ENCODE measurements at regions of chr9 and their contacts with region 1.

Region 1: DNA sequence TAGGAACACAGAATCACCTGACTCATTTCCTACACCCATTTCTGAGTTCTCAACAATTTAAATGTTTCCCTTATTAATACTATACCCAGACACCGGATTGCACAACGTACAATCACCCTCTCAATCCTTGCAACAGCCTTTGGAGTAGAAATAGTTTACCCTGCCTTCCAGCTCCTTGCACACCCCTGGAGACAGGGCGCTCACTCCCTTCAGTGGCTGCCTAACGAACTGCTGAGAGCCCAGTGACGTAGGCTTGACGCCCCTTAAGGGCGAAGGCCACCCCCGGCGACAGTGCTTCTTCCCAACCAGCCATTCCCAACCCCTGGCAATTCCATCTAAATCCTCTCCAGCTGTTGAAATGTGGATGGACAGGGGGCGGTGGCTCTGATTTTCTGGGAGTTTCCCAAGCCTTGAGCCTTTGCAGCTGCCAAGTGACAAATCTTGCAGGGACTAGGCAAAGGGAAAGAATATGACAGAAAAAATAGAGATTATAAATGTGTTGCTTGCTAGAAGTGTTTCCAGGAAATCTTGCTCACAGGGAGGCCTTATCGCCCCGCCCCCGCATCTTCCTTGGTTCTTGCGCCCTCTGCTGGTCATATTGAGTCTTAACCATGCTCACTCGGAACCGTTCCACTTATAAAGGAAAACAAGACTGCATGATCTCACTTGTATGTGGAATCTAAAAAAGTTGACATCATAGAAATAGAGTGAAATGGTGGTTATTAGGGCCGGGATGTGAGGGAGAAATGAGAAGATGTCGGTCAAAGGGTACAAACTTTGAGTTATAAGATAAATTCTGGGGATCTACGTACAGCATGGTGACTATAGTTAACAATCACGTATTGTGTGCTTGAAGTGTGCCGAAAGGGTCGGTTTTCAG is 7.6 kb upstream of the BARX1 start:
- DNase-seq: peak; percentile 88 to 91 (median 90)
- ATAC-seq: peak; percentile 93
- H3K4me3 ChIP-seq: no peak overlapping the region
- H3K27ac ChIP-seq: no peak overlapping the region
- H3K4me1 ChIP-seq: peaks cover 5 to 27% of the 10 kb centered on the region in 2 experiments; a peak in 4 of 5 replicates
- H3K27me3 ChIP-seq: peaks cover 19 to 47% of the 10 kb centered on the region in 2 experiments; a peak in 4 of 5 replicates
- CTCF ChIP-seq: peak; percentile 84 to 90 (median 85)
- EP300 ChIP-seq: peak; percentile 48
- POLR2A ChIP-seq: no peak
- RAD21 ChIP-seq: peak; percentile 69 to 90

Region 2: GRCh38 chr9:93693129-93693528 is 269.7 kb before region 1 on chr9:
- CTCF ChIA-PET with region 1: no interaction called
- POLR2A ChIA-PET with region 1: no interaction called
- in situ Hi-C with region 1: loop called (anchors 5 kb)
- intact Hi-C with region 1: no loop called
- DNase-seq: no peak
- ATAC-seq: no peak
- H3K4me3 ChIP-seq: no peak overlapping the region
- H3K27ac ChIP-seq: no peak overlapping the region
- H3K4me1 ChIP-seq: no peaks in the 10 kb centered on the region
- H3K27me3 ChIP-seq: peaks cover 10 to 18% of the 10 kb centered on the region in 2 experiments; a peak in 3 of 5 replicates
- CTCF ChIP-seq: no peak
- EP300 ChIP-seq: no peak
- POLR2A ChIP-seq: no peak
- RAD21 ChIP-seq: no peak

Region 3: DNA sequence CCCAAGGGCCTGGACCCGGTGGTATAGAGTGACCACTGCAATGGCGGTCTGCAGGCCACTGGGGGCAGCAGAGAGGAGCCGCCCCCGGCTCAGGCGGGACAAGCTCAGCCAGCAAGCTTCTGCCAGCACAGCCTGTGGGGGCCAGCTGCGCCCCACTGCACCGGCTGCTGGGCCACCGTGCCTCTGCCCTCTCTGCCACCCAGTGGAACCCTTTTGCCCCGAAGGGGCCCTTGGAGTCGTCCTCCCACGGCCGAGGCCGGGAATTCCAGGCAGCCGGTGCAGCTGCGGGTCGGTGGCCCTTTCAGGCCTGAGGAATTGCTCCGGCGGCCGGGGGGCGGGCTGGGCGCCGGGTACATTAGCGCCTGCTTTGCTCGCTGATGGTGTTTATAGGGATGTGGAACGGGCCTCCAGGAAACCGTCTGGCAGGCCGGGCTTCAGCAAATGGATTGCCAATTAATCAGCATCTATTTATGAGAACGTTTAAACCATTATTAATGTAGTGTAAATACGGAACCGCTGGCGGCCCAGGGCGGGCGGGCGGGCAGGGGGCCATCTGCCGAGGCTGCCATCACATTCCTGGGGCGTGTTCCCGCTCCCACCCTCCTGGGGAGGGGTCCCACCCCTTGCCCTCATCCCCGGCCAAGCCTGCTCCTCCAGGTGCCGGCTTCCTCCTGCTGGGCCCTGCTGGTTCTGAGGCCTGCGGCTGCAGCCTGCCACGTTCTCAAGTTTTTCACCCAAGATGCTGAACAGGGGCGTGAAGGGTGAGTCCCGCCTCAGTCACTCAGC is 135.1 kb before region 1 on chr9:
- CTCF ChIA-PET with region 1: interaction called, 4 read pairs
- POLR2A ChIA-PET with region 1: no interaction called
- in situ Hi-C with region 1: no loop called
- intact Hi-C with region 1: loop called (anchors 5 kb)
- DNase-seq: peak; percentile 73 to 89 (median 87)
- ATAC-seq: peak; percentile 99
- H3K4me3 ChIP-seq: no peak overlapping the region
- H3K27ac ChIP-seq: no peak overlapping the region
- H3K4me1 ChIP-seq: peaks cover 0 to 20% of the 10 kb centered on the region in 2 experiments; a peak in 2 of 5 replicates
- H3K27me3 ChIP-seq: peaks cover 0 to 12% of the 10 kb centered on the region in 2 experiments; a peak in 3 of 5 replicates
- CTCF ChIP-seq: peak; percentile 80 to 88 (median 85)
- EP300 ChIP-seq: no peak
- POLR2A ChIP-seq: no peak
- RAD21 ChIP-seq: peak in 1 of 2 experiments; percentile 45; a peak in 2 of 4 replicates

Region 4: GRCh38 chr9:94002316-94003140 is 39.7 kb after region 1 on chr9:
- CTCF ChIA-PET with region 1: interaction called, 3 read pairs
- POLR2A ChIA-PET with region 1: interaction called, 3 read pairs
- in situ Hi-C with region 1: no loop called
- intact Hi-C with region 1: loop called (anchors 5 kb)
- DNase-seq: peak; percentile 46 to 75 (median 58)
- ATAC-seq: peak; percentile 88
- H3K4me3 ChIP-seq: no peak overlapping the region
- H3K27ac ChIP-seq: no peak overlapping the region
- H3K4me1 ChIP-seq: no peaks in the 10 kb centered on the region
- H3K27me3 ChIP-seq: peaks cover 0 to 4% of the 10 kb centered on the region in 2 experiments; a peak in 1 of 5 replicates
- CTCF ChIP-seq: peak; percentile 77 to 89 (median 80)
- EP300 ChIP-seq: no peak
- POLR2A ChIP-seq: no peak
- RAD21 ChIP-seq: peak; percentile 43 to 79